Body of pancreas (tissue), 4 donors: ENCODE measurements at regions of chr5 and their contacts with region 1.

Region 1: GRCh38 chr5:173625696-173626504 is 9.4 kb upstream of the BOD1 start:
- DNase-seq: no peak
- ATAC-seq: no peak
- H3K4me3 ChIP-seq: no peak overlapping the region
- H3K27ac ChIP-seq: no peak overlapping the region
- H3K4me1 ChIP-seq: no peaks in the 10 kb centered on the region
- H3K27me3 ChIP-seq: no peaks in the 10 kb centered on the region
- CTCF ChIP-seq: peak in 2 of 7 experiments; percentile 7 to 9
- POLR2A ChIP-seq: no peak

Region 2: DNA sequence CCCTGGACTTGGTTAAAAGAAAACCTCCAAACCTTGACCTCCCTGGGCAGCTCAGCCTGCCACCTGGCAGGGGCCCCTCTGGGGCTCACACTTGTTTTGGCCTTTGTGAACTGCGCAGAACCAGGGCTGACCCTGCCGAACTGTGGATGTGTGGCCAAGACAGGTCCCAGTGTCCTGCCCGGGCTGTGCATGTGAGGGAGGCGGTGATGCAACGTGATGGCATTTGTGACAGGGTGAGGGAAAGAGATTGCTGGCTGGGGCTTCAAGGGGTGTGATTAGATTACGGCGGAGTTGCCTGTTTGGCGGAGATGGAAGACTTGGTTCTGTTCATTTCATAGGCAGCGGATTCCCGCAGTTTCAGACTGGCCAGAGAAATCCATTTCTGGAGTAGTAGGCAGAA is 360.5 kb before region 1 on chr5:
- intact Hi-C with region 1: no loop called
- DNase-seq: no peak
- ATAC-seq: no peak
- H3K4me3 ChIP-seq: no peak overlapping the region
- H3K27ac ChIP-seq: no peak overlapping the region
- H3K4me1 ChIP-seq: no peaks in the 10 kb centered on the region
- H3K27me3 ChIP-seq: peaks cover 0 to 7% of the 10 kb centered on the region in 2 donors
- CTCF ChIP-seq: no peak
- POLR2A ChIP-seq: no peak

Region 3: DNA sequence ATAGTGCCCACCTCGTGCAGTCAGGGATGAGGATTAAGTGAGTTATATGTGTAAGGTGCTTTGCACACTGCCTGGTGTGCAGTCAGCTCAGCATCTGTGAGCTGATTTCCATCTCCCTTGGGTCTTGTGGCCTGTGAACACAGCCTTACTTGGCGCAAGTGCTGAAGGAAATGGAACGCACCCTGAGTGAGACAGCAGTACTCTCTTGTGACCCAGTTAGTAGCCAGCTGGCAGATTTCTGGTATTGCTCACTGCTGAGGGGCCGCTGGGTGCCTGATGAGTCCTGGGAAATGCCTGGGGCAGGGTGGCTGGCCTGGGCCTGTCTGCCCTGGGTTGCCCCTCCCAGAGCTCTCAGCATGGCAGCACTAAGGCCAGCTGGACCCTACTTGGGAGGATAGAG is 81.5 kb after region 1 on chr5:
- intact Hi-C with region 1: loop called (anchors 10 kb)
- DNase-seq: peak in 3 of 4 donors; percentile 34 to 78 (median 56)
- ATAC-seq: peak; percentile 25
- H3K4me3 ChIP-seq: no peak overlapping the region
- H3K27ac ChIP-seq: peak overlapping the region; percentile 15 to 47 (median 36)
- H3K4me1 ChIP-seq: peaks cover 23% of the 10 kb centered on the region
- H3K27me3 ChIP-seq: no peaks in the 10 kb centered on the region
- CTCF ChIP-seq: no peak
- POLR2A ChIP-seq: no peak

Region 4: GRCh38 chr5:173972925-173973615 is 347.2 kb after region 1 on chr5:
- intact Hi-C with region 1: loop called (anchors 5 kb)
- DNase-seq: peak; percentile 88 to 93 (median 90)
- ATAC-seq: peak; percentile 91
- H3K4me3 ChIP-seq: peak overlapping the region; percentile 5 to 42
- H3K27ac ChIP-seq: peak overlapping the region; percentile 64 to 85 (median 70)
- H3K4me1 ChIP-seq: peaks cover 15% of the 10 kb centered on the region
- H3K27me3 ChIP-seq: no peaks in the 10 kb centered on the region
- CTCF ChIP-seq: peak; percentile 81 to 97 (median 93)
- POLR2A ChIP-seq: peak in 2 of 3 donors; percentile 27 to 36